Esophagus squamous epithelium (tissue), 5 donors: ENCODE measurements at regions of chr12 and their contacts with region 1.

Region 1: GRCh38 chr12:126069549-126070165 is 1004.4 kb downstream of the AACS start:
- DNase-seq: no peak
- H3K4me3 ChIP-seq: no peak overlapping the region
- H3K27ac ChIP-seq: no peak overlapping the region
- H3K4me1 ChIP-seq: no peaks in the 10 kb centered on the region
- H3K27me3 ChIP-seq: no peaks in the 10 kb centered on the region
- CTCF ChIP-seq: peak in 5 of 6 experiments; percentile 29 to 75 (median 57)
- POLR2A ChIP-seq: no peak

Region 2: DNA sequence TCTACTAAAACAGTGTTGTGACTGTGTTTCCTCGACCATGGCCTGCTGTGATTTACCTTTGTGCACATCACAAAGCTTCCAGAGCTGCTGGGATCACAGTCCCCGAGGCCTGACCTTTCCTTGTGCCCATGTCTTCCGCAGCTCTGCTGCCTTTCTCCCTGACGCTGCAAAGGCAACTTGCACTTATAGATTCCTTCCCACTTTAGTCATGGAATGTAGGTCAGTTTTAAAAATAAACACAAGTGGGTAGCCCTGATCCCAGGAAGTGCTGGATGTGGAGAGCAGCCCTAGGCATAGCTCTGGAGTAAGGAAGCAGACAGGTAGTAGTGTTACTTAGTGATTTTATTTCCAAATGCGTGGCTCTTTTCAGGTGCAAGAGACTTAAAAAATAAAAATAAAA is 178.7 kb before region 1 on chr12:
- intact Hi-C with region 1: no loop called
- DNase-seq: no peak
- H3K4me3 ChIP-seq: no peak overlapping the region
- H3K27ac ChIP-seq: no peak overlapping the region
- H3K4me1 ChIP-seq: no peaks in the 10 kb centered on the region
- H3K27me3 ChIP-seq: no peaks in the 10 kb centered on the region
- CTCF ChIP-seq: no peak
- POLR2A ChIP-seq: no peak

Region 3: DNA sequence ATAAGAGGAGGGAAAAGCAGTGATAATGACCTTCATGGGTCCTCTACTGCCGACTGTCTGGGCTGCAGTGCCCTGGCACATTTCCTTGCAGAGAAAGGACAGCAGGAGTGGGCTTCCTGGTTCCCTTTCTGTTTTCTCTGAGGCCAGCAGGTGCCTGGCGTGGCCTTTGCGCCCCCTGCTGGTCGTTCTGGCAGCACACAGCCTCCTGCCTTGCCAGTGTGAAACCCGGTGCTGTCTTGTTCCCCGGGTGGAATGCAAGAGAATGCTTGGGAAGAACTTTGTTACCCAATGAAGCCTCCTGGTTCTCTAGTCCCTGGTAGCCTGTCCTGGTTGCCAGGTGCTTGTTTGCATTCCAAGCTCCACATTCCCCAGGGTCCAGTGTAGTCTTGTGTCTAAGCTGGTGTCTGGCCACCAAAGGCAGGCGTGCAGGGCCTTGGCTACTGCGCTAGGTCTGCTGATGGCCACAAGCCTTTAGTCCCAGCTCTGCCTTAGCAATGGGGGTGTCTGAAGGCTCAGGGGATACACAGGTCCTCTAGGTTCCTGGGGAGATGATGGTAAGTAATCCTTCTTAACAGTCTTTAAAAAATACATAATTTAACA is 804.9 kb after region 1 on chr12:
- intact Hi-C with region 1: loop called (anchors 10 kb)
- DNase-seq: no peak
- H3K4me3 ChIP-seq: no peak overlapping the region
- H3K27ac ChIP-seq: no peak overlapping the region
- H3K4me1 ChIP-seq: no peaks in the 10 kb centered on the region
- H3K27me3 ChIP-seq: no peaks in the 10 kb centered on the region
- CTCF ChIP-seq: peak; percentile 64 to 92 (median 76)
- POLR2A ChIP-seq: no peak